Natural killer cell (primary cell): ENCODE measurements at regions of chr1 and their contacts with region 1.

Region 1: DNA sequence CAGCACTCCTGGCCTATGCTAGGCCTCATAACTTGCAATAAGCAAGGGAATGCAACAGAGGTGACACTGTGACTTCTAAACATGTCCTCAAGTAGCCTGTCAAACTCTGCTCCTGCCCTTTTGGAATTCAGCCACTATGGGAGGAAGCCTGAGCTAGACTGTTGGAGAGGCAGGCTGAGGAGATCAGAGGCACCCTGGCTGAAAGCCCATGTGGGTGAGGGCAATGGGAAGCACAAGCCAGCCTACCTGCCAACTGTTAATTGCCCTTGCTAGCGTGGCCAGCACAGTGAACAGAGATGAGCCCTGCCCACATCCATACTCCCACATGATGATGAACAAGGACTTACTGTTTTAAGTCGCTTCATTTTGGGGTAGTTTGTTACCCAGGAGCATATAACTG is 17.7 kb downstream of the GNB1 start:
- DNase-seq: no peak
- ATAC-seq: no peak
- H3K4me3 ChIP-seq: no peak overlapping the region
- H3K4me3 Mint-ChIP-seq: peak overlapping the region; percentile 51
- H3K27ac ChIP-seq: no peak overlapping the region
- H3K27ac Mint-ChIP-seq: peak overlapping the region; percentile 50 to 83
- H3K4me1 ChIP-seq: peaks cover 61% of the 10 kb centered on the region
- H3K4me1 Mint-ChIP-seq: peaks cover 78 to 80% of the 10 kb centered on the region in 2 donors
- H3K27me3 ChIP-seq: no peaks in the 10 kb centered on the region
- H3K27me3 Mint-ChIP-seq: no peaks in the 10 kb centered on the region
- CTCF ChIP-seq: no peak

Region 2: GRCh38 chr1:1721201-1721600 is 152.0 kb before region 1 on chr1:
- intact Hi-C with region 1: no loop called
- DNase-seq: no peak
- ATAC-seq: no peak
- H3K4me3 ChIP-seq: no peak overlapping the region
- H3K4me3 Mint-ChIP-seq: no peak overlapping the region
- H3K27ac ChIP-seq: no peak overlapping the region
- H3K27ac Mint-ChIP-seq: peak overlapping the region in 1 of 2 donors; percentile 18
- H3K4me1 ChIP-seq: peaks cover 4% of the 10 kb centered on the region
- H3K4me1 Mint-ChIP-seq: peaks cover 0 to 8% of the 10 kb centered on the region in 2 donors
- H3K27me3 ChIP-seq: no peaks in the 10 kb centered on the region
- H3K27me3 Mint-ChIP-seq: no peaks in the 10 kb centered on the region
- CTCF ChIP-seq: no peak

Region 3: DNA sequence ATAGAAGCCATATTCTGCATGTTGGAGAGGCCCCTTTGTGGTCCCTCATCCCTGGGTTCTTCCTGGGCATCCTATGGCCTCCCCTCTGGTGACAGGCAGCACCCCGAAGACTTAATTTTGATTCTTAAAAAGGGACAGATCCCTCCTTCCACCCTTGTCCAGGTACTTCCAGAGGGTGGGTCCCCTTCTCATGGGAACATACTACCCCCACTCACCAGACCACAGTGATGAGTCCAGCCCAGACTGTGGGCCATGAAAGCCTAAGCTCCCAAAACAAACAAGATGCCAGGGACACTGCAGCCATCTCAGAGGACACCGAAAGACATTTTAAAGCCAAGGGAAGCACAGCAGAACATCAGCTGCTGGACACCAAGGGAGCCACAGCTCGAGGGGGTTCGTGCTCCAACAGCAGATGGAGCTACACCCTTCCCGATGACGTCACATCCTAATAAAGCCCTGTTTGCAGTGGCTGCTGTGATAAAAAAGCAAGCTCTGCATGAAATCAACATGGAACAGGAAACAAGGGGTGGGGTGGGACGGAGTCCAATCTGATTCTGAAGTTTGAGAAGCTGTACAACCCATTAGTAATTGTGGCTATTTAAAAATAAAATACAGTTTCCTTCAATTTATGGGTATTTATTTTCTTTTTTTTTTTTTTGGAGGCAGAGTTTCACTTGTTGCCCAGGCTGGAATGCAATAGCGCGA is 14.7 kb before region 1 on chr1:
- intact Hi-C with region 1: loop called (anchors 2 kb)
- DNase-seq: peak in 1 of 2 donors; percentile 73
- ATAC-seq: peak in 2 of 3 donors; percentile 43 to 47
- H3K4me3 ChIP-seq: no peak overlapping the region
- H3K4me3 Mint-ChIP-seq: peak overlapping the region; percentile 50
- H3K27ac ChIP-seq: peak overlapping the region; percentile 28
- H3K27ac Mint-ChIP-seq: peak overlapping the region; percentile 63 to 80
- H3K4me1 ChIP-seq: peaks cover 62% of the 10 kb centered on the region
- H3K4me1 Mint-ChIP-seq: peaks cover 64 to 77% of the 10 kb centered on the region in 2 donors
- H3K27me3 ChIP-seq: no peaks in the 10 kb centered on the region
- H3K27me3 Mint-ChIP-seq: no peaks in the 10 kb centered on the region
- CTCF ChIP-seq: no peak

Region 4: GRCh38 chr1:2055911-2056575 is 182.9 kb after region 1 on chr1:
- intact Hi-C with region 1: no loop called
- DNase-seq: no peak
- ATAC-seq: no peak
- H3K4me3 ChIP-seq: no peak overlapping the region
- H3K4me3 Mint-ChIP-seq: no peak overlapping the region
- H3K27ac ChIP-seq: no peak overlapping the region
- H3K27ac Mint-ChIP-seq: no peak overlapping the region
- H3K4me1 ChIP-seq: peaks cover 9% of the 10 kb centered on the region
- H3K4me1 Mint-ChIP-seq: peaks cover 0 to 13% of the 10 kb centered on the region in 2 donors
- H3K27me3 ChIP-seq: no peaks in the 10 kb centered on the region
- H3K27me3 Mint-ChIP-seq: no peaks in the 10 kb centered on the region
- CTCF ChIP-seq: no peak